ENCODE measurements at regions of chr20 and their contacts with region 1.

Region 1: GRCh38 chr20:22418738-22419137 is 165.6 kb downstream of the FOXA2 start:
- DNase-seq: no peak
- ATAC-seq: no peak
- H3K4me3 ChIP-seq: no peak overlapping the region
- H3K27ac ChIP-seq: no peak overlapping the region
- H3K4me1 ChIP-seq: no peaks in the 10 kb centered on the region
- H3K27me3 ChIP-seq: peaks cover 0 to 2% (median 0%) of the 10 kb centered on the region in 3 donors
- CTCF ChIP-seq: no peak

Region 2: DNA sequence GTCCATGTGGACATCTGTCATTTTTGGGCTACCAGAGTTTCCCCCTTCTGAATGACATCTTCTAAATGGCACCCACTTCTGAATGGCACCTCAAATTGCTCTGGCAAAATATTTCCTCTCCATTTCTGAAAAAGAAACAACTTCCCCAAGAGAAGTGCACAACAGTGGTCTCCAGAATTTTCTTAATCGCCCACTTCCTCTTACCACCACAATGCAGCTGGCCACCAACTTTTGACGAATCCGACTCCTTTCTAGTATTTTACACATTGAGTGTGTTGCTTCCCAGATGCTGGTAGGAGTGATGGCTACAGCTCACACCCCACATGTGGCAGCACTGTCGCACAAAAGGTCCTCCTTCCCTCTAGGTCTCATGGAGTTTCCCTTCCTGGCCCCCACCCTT is 50.5 kb before region 1 on chr20:
- intact Hi-C with region 1: loop called in 1 of 2 experiments (anchors 5 kb)
- DNase-seq: no peak
- ATAC-seq: no peak
- H3K4me3 ChIP-seq: no peak overlapping the region
- H3K27ac ChIP-seq: no peak overlapping the region
- H3K4me1 ChIP-seq: peaks cover 7% of the 10 kb centered on the region
- H3K27me3 ChIP-seq: no peaks in the 10 kb centered on the region
- CTCF ChIP-seq: no peak

Measured in psoas muscle (tissue), 8 donors.